Activated CD4-positive, alpha-beta memory T cell treated with anti-CD3 and anti-CD28 coated beads for 36 hours (primary cell): ENCODE measurements at regions of chr10 and their contacts with region 1.

Region 1: DNA sequence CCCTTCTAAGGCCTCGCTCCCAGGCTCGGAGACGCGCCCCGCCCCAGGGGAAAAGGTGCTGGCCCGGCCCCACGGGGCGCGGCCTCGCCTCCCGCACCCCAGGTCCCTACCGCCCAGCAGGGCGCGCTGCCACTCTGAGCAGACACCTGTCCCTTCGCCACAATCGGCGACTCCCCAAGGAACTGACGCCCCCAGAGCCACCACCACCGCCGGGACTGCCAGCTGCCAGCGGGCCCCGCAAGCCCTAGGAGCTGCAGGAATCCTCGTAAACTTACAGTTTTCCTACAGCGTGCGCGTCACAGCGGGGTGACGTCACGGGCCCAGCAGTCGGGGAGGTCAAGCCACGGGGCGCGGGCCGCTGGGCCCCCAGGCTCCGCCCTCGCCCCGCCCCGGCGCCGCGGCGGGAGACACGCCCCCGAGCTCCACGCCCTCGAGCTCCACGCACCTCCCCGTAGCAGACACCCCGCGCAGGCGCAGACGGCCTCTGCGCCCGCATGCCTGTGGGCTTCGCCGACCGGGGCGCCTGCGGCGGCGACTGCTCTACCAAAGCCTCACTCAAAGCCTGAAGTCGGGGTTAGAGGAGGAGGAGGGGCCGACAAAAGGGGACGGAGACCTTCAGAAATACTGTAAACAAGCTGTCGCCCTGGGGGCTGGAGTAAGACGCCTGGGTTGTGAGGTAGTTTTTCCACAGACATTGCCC is at the start of gene ZNF438:
- DNase-seq: peak; percentile 96
- H3K4me3 Mint-ChIP-seq: peak within 1 kb of the TSS; percentile 86
- H3K27ac Mint-ChIP-seq: peak within 1 kb of the TSS; percentile 96
- H3K4me1 Mint-ChIP-seq: peaks cover 13% of the 10 kb centered on the region
- H3K27me3 Mint-ChIP-seq: no peaks in the 10 kb centered on the region
- total RNA-seq, gene ZNF438: 3.7 TPM

Region 2: DNA sequence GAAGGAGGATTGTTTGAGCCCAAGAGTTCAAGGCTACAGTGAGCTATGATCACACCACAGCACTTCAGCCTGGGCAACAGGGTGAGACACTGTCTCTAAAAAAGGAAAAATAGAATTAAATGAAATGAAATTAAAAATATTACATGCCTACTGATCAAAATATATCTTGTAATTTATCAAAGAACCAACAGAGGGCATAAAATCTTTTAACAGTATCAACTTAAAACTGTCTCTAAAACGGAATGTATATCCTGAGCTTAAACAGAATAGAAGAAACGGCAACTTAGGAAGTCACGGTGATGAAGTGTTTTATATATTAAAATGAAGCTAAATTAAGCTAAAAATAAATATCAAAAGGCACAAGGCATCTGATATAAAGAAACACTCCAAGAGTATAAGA is 761.5 kb before region 1 on chr10:
- CTCF ChIA-PET with region 1: no interaction called
- POLR2A ChIA-PET with region 1: no interaction called
- intact Hi-C with region 1: no loop called
- DNase-seq: no peak
- H3K4me3 Mint-ChIP-seq: no peak overlapping the region
- H3K27ac Mint-ChIP-seq: no peak overlapping the region
- H3K4me1 Mint-ChIP-seq: no peaks in the 10 kb centered on the region
- H3K27me3 Mint-ChIP-seq: peaks cover 15% of the 10 kb centered on the region

Region 3: GRCh38 chr10:30783939-30784500 is 247.7 kb before region 1 on chr10:
- CTCF ChIA-PET with region 1: interaction called, 17 read pairs
- POLR2A ChIA-PET with region 1: interaction called, 5 read pairs
- intact Hi-C with region 1: loop called (anchors 1 kb)
- DNase-seq: peak; percentile 91
- H3K4me3 Mint-ChIP-seq: peak overlapping the region; percentile 62
- H3K27ac Mint-ChIP-seq: peak overlapping the region; percentile 45
- H3K4me1 Mint-ChIP-seq: peaks cover 18% of the 10 kb centered on the region
- H3K27me3 Mint-ChIP-seq: no peaks in the 10 kb centered on the region

Region 4: DNA sequence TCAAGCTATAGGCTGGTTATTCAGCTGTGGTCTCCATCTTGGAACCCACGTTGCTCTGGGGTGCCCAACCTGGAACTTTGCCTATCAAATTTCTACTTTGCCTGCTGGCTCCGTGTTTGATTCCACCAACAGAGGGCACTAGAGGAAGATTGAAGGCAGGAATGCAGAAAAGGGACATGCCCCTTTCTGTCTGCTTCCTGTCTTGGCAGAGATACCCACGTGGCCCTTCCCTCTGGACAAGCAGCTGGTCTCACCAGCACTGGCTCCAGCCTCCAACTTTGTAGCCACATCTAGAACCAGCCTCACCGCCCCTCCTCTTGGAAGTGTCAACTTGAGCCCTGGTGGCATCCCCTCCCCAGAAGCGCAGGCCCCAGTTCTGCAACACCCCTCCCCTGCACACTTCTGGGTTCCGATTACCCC is 52.1 kb after region 1 on chr10:
- CTCF ChIA-PET with region 1: interaction called, 9 read pairs
- POLR2A ChIA-PET with region 1: no interaction called
- intact Hi-C with region 1: loop called (anchors 1 kb)
- DNase-seq: peak; percentile 79
- H3K4me3 Mint-ChIP-seq: no peak overlapping the region
- H3K27ac Mint-ChIP-seq: no peak overlapping the region
- H3K4me1 Mint-ChIP-seq: peaks cover 3% of the 10 kb centered on the region
- H3K27me3 Mint-ChIP-seq: no peaks in the 10 kb centered on the region

Region 5: DNA sequence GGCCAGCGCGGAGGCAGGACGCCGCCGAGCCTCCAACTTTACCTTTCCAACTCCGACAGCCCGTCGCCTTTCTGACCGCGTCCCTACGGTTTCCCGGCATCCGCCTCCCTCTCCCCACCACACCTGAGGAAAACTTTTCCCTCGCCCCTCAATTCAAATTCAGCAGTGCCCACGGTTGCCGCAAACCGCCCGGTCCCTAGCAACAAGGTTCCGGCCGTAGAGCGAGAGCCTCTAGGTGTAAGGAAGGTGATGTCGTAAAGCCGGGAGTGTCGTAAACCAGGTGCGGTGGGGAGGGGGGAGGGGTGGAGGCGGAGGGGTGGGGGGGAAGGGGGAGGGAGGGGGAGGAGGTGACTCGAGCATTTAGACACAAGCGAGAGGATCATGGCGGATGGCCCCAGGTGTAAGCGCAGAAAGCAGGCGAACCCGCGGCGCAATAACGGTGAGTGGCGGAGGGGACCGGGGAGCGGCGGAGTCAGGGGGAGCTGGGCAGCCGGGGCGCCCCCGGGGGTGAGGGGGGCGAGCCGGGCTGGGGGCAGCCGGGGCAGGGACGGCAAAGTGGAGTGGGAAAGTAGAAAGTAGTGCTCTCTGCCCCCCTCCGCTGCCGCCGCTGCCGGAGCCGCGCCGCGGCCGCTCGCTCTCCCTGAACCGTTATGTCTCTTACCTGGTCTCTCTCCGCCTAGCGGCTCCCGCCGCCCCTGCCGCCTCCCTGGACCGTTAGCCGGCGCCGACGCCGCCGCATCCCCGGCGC is 287.3 kb after region 1 on chr10 and contains the start of gene ZEB1:
- CTCF ChIA-PET with region 1: no interaction called
- POLR2A ChIA-PET with region 1: interaction called, 17 read pairs
- intact Hi-C with region 1: loop called (anchors 1 kb)
- DNase-seq: peak; percentile 94
- H3K4me3 Mint-ChIP-seq: peak within 1 kb of the TSS; percentile 98
- H3K27ac Mint-ChIP-seq: peak within 1 kb of the TSS; percentile 99
- H3K4me1 Mint-ChIP-seq: peaks cover 32% of the 10 kb centered on the region
- H3K27me3 Mint-ChIP-seq: no peaks in the 10 kb centered on the region
- total RNA-seq, gene ZEB1: 33.9 to 37.8 TPM

Region 6: DNA sequence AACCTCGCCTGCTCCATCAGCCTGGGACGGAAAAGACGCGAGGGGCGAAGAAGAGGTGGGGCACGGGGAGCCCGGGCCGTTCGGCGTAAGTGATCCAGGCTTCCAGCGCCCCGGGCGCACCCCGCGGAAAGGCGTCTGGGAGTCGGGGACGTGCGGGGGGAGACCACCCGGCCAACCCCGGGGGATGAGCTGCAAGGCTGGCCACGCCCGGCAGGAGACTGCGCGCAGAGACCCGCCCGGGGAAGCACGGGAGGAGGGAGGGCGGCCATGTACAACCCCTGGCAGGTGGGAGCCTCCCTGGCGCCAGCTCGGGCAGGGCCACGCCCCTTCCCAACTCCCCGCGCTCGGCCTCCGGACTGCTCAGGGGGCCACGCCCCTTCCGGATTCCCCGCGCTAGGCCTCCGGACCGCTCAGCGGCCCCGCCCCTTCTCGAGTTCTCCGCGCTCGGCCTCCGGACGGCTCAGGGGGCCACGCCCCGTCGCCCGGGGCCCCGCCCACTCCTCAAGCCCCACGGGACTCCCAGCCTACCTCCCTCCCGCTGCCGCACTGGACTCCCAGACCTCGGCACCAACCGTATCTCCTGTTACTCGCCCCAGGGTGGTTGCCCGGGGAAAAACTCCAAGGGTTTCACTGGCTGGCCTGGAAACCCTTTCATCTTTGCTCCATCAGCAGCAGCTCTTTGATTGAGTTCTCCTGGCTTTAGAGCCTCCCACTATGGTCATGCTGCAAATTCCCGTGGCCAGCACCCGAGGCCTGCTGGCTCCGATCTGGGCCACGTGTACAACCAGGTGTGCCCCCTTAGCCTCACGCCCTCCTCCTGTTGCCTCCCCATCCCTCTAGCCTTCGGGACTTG is 571.8 kb after region 1 on chr10:
- CTCF ChIA-PET with region 1: no interaction called
- POLR2A ChIA-PET with region 1: interaction called, 4 read pairs
- intact Hi-C with region 1: loop called (anchors 5 kb)
- DNase-seq: peak; percentile 93
- H3K4me3 Mint-ChIP-seq: peak overlapping the region; percentile 77
- H3K27ac Mint-ChIP-seq: no peak overlapping the region
- H3K4me1 Mint-ChIP-seq: peaks cover 25% of the 10 kb centered on the region
- H3K27me3 Mint-ChIP-seq: peaks cover 1% of the 10 kb centered on the region

Region 7: DNA sequence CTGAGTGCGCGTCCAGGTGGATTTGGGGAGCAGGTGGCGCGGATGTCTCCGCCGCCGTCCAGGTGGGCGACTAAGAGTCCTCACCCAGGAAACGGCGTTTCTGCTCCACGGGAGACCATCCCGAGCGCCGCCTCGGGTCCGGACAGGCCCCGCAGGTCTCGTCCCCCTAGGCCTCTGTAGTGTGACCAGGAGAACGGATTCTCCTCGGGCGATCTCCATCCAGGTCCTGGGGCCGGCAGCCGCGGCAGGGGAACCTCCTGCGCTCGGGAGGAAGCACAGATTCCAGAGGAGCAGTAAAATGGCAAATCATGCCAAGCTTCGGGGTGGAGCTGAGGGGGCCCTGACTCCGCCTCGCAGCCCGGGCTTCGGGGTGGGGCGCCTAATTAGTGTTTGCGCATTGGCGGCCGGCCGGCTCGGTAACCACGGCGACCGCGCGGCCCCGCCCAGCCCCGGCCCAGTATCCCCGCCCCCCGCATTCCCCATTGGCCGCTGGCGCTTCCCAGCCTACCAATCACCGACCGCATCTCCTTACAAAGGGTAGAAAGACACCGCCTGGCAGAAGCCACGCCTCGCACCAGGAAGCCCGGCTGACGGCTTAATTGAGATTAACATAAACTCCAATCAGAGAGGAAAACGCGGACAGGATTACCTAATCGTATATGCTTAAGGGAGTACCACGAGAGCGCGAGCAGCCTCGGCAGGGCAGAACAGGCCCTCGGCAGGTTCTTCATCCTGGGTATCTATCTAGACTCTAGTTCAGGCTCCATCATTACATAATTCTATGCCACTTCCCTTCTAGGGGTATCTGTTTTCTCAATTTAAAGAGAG is 728.3 kb after region 1 on chr10:
- CTCF ChIA-PET with region 1: no interaction called
- POLR2A ChIA-PET with region 1: no interaction called
- intact Hi-C with region 1: loop called (anchors 1 kb)
- DNase-seq: peak; percentile 97
- H3K4me3 Mint-ChIP-seq: peak overlapping the region; percentile 96
- H3K27ac Mint-ChIP-seq: peak overlapping the region; percentile 91
- H3K4me1 Mint-ChIP-seq: peaks cover 10% of the 10 kb centered on the region
- H3K27me3 Mint-ChIP-seq: no peaks in the 10 kb centered on the region